K562 (cell line): ENCODE measurements at regions of chr9 and their contacts with region 1.

Region 1: DNA sequence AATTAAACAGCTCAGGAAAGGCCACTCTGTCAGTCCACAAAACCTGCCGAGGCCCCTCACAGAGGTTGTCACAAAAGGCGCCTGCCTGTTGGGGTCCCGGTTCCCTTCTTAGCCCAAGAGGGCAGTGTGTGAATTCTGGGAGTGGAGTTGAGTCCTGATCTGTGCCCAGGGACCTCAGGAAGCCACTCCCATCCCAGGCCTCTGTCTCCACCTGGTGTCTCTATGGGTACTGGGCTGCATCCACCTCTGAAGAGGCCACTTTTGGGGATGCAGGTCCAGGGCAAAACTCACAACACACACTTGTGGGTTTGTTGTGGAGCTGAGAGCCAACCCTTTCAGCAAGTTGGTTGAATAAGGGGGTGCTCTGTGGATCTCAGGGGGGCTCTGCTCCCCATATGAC is 74.3 kb upstream of the STXBP1 start:
- DNase-seq: peak in 2 of 4 experiments; percentile 31 to 40
- ATAC-seq: peak; percentile 59
- H3K4me3 ChIP-seq: no peak overlapping the region
- H3K27ac ChIP-seq: no peak overlapping the region; the same call in 2 of the 3 replicates
- H3K4me1 ChIP-seq: peaks cover 29 to 60% of the 10 kb centered on the region in 2 experiments
- H3K27me3 ChIP-seq: no peaks in the 10 kb centered on the region
- CTCF ChIP-seq: peak; percentile 35 to 49 (median 41); a peak in 4 of 6 replicates
- EP300 ChIP-seq: no peak
- POLR2A ChIP-seq: no peak
- RAD21 ChIP-seq: peak in 1 of 2 experiments; percentile 40; a peak in 2 of 4 replicates

Region 2: GRCh38 chr9:127578955-127579853 is 41.4 kb after region 1 on chr9:
- CTCF ChIA-PET with region 1: no interaction called
- POLR2A ChIA-PET with region 1: no interaction called
- in situ Hi-C with region 1: no loop called
- intact Hi-C with region 1: loop called (anchors 5 kb)
- DNase-seq: peak in 2 of 4 experiments; percentile 13 to 37
- ATAC-seq: peak; percentile 67
- H3K4me3 ChIP-seq: no peak overlapping the region
- H3K27ac ChIP-seq: peak overlapping the region; percentile 26; the same call in 2 of the 3 replicates
- H3K4me1 ChIP-seq: peaks cover 14 to 22% of the 10 kb centered on the region in 2 experiments; a peak in 4 of 5 replicates
- H3K27me3 ChIP-seq: no peaks in the 10 kb centered on the region
- CTCF ChIP-seq: peak in 2 of 3 experiments; percentile 38 to 40; a peak in 4 of 6 replicates
- EP300 ChIP-seq: no peak
- POLR2A ChIP-seq: no peak
- RAD21 ChIP-seq: peak in 1 of 2 experiments; percentile 44; a peak in 2 of 4 replicates